Mammary epithelial cell (primary cell): ENCODE measurements at regions of chr16 and their contacts with region 1.

Region 1: DNA sequence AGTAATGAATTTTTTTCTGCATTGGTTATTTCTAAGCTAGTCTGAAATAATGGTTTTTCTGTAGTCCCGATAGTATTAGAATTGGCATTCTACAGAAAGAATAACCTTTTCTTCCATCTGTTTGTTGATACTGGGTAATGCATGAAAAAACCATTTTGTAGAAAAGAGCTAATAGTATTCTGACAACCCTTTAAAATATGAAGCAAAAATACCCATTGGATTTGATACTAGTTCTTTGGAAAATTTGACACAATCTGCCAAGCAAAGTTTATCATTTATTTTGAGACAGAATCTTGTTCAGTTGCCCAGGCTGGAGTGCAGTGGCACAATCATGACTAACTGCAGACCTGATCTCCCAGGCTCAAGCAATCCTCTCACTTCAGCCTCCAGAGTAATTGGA is 366.8 kb upstream of the MON1B start:
- DNase-seq: no peak
- H3K4me3 ChIP-seq: no peak overlapping the region
- H3K27ac ChIP-seq: no peak overlapping the region
- H3K4me1 ChIP-seq: no peaks in the 10 kb centered on the region
- H3K27me3 ChIP-seq: no peaks in the 10 kb centered on the region
- CTCF ChIP-seq: no peak

Region 2: DNA sequence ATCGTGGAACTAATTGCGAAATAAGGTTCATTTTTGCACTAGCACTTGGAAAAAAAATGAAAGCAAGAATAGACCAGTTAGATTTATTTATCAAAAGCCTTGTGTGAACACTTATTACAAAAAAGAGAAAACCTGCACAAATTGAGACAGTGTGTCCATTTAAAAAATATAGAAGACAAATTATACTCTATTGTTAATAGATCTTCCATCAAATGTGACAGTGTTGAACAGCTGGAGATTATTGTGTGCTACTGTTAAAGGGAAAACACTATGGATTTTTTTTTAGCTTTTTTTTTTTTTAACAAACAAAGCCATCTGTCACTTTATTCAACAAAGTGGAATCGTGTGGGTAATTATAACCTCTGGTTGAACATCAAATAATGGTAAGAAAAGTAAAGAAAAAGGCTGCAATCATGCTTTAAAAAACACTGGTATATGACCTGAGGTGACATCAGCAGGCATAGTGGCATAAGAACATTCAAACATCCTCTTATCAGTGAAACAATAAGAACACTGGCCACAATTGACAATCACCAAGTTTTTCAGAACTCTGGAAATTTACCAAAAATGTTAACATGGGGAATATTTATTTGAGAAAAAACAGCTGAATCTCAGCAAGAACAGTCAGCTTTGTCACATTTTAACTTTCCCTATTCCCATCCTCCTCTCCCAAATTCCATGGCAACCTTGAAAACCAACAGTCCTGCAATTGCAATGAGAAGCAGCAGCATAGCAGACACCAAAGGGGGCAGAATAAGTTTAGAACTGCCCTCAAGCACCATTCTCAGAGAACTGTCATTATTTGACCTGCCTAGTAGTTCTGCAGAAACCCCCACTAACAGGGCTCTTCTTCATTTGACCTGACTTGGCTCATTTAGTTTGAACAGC is 75.5 kb before region 1 on chr16:
- CTCF ChIA-PET with region 1: no interaction called
- dilution Hi-C with region 1: no loop called
- in situ Hi-C with region 1: no loop called
- intact Hi-C with region 1: loop called (anchors 10 kb)
- DNase-seq: no peak
- H3K4me3 ChIP-seq: no peak overlapping the region
- H3K27ac ChIP-seq: no peak overlapping the region
- H3K4me1 ChIP-seq: no peaks in the 10 kb centered on the region
- H3K27me3 ChIP-seq: no peaks in the 10 kb centered on the region
- CTCF ChIP-seq: no peak

Region 3: GRCh38 chr16:76835339-76835738 is 11.1 kb after region 1 on chr16:
- CTCF ChIA-PET with region 1: no interaction called
- dilution Hi-C with region 1: no loop called
- in situ Hi-C with region 1: no loop called
- intact Hi-C with region 1: no loop called
- DNase-seq: no peak
- H3K4me3 ChIP-seq: no peak overlapping the region
- H3K27ac ChIP-seq: no peak overlapping the region
- H3K4me1 ChIP-seq: no peaks in the 10 kb centered on the region
- H3K27me3 ChIP-seq: no peaks in the 10 kb centered on the region
- CTCF ChIP-seq: no peak

Region 4: GRCh38 chr16:76862901-76863300 is 38.7 kb after region 1 on chr16:
- CTCF ChIA-PET with region 1: no interaction called
- dilution Hi-C with region 1: loop called (anchors 5 kb)
- in situ Hi-C with region 1: no loop called
- intact Hi-C with region 1: no loop called
- DNase-seq: no peak
- H3K4me3 ChIP-seq: no peak overlapping the region
- H3K27ac ChIP-seq: no peak overlapping the region
- H3K4me1 ChIP-seq: no peaks in the 10 kb centered on the region
- H3K27me3 ChIP-seq: no peaks in the 10 kb centered on the region
- CTCF ChIP-seq: no peak